CD4-positive, alpha-beta T cell (primary cell): ENCODE measurements at regions of chr15 and their contacts with region 1.

Region 1: GRCh38 chr15:84981054-84981710 is 474 bp upstream of the PDE8A start:
- DNase-seq: peak; percentile 90 to 99 (median 95)
- ATAC-seq: peak; percentile 69
- H3K4me3 ChIP-seq: peak overlapping the region; percentile 98
- H3K4me3 Mint-ChIP-seq: peak overlapping the region; percentile 98
- H3K27ac ChIP-seq: peak overlapping the region; percentile 74 to 93
- H3K27ac Mint-ChIP-seq: peak overlapping the region; percentile 95
- H3K4me1 ChIP-seq: peaks cover 32% of the 10 kb centered on the region
- H3K4me1 Mint-ChIP-seq: peaks cover 52% of the 10 kb centered on the region
- H3K27me3 ChIP-seq: no peaks in the 10 kb centered on the region
- H3K27me3 Mint-ChIP-seq: no peaks in the 10 kb centered on the region
- CTCF ChIP-seq: peak; percentile 31

Region 2: DNA sequence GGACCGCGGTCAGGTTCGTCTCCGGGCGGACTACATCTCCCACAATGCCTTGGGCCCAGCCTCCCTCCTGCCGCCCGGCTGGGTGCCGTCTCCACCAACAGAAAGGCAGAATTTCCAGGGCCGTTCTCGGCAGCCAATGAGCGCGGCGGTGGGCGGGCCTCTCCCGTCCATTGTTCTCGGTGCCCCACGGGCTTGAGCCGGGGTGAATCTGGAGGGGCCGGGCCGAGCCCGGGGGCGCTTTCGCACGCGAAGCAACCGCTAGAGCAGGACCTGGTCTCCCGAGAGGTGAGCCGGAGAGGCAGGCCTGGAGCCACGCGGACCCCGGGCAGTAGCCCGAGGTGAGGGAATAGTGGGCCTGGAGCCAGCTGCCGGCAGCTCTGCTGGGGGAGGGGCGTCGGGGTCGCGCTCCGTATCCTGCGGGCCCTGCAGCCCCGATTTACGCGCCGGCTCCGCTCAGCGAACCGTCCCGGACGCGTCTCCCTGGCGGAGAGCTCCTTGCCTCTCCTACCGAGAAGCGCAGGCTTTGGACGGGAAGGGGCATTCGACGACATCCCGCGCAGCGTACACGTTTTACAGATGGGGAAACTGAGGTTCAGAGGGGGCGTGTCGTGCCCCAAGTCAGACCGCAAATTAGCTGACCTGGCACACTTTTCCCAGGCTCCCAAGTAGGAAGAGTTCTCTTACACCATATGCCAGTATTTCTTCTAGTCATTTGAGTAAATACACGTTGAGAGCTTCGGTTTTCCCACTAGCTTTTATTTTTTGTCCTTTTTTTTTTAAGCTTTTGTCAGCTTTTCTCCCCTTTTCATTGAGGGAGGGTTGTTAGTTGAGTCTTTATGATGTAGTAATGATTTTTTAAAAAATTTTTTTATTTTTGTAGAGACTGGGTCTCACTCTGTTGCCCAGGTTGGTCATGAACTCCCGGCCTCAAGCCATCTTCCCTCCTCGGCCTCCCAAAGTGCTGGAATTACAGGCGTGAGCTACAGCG is 380.0 kb before region 1 on chr15 and contains the start of gene ZSCAN2:
- CTCF ChIA-PET with region 1: no interaction called
- POLR2A ChIA-PET with region 1: interaction called, 4 read pairs
- intact Hi-C with region 1: loop called (anchors 2 to 5 kb)
- DNase-seq: peak; percentile 87 to 95 (median 90)
- ATAC-seq: peak; percentile 97
- H3K4me3 ChIP-seq: peak within 1 kb of the TSS; percentile 95
- H3K4me3 Mint-ChIP-seq: peak within 1 kb of the TSS; percentile 98
- H3K27ac ChIP-seq: peak within 1 kb of the TSS in 1 of 2 donors; percentile 13
- H3K27ac Mint-ChIP-seq: peak within 1 kb of the TSS; percentile 78
- H3K4me1 ChIP-seq: peaks cover 62% of the 10 kb centered on the region
- H3K4me1 Mint-ChIP-seq: peaks cover 72% of the 10 kb centered on the region
- H3K27me3 ChIP-seq: no peaks in the 10 kb centered on the region
- H3K27me3 Mint-ChIP-seq: no peaks in the 10 kb centered on the region
- CTCF ChIP-seq: no peak
- total RNA-seq, gene ZSCAN2: 3.8 to 5.0 TPM

Region 3: GRCh38 chr15:84716036-84716799 is 265.0 kb before region 1 on chr15 and contains the start of gene SEC11A:
- CTCF ChIA-PET with region 1: no interaction called
- POLR2A ChIA-PET with region 1: interaction called, 16 read pairs
- intact Hi-C with region 1: no loop called
- DNase-seq: peak; percentile 83 to 95 (median 89)
- ATAC-seq: peak; percentile 95
- H3K4me3 ChIP-seq: peak within 1 kb of the TSS; percentile 99
- H3K4me3 Mint-ChIP-seq: peak within 1 kb of the TSS; percentile 93
- H3K27ac ChIP-seq: peak within 1 kb of the TSS; percentile 70 to 74
- H3K27ac Mint-ChIP-seq: peak within 1 kb of the TSS; percentile 95
- H3K4me1 ChIP-seq: peaks cover 46% of the 10 kb centered on the region
- H3K4me1 Mint-ChIP-seq: peaks cover 60% of the 10 kb centered on the region
- H3K27me3 ChIP-seq: no peaks in the 10 kb centered on the region
- H3K27me3 Mint-ChIP-seq: no peaks in the 10 kb centered on the region
- CTCF ChIP-seq: no peak
- total RNA-seq, gene SEC11A: 44.1 to 47.0 TPM

Region 4: GRCh38 chr15:84894442-84895361 is 86.5 kb before region 1 on chr15:
- CTCF ChIA-PET with region 1: no interaction called
- POLR2A ChIA-PET with region 1: no interaction called
- intact Hi-C with region 1: no loop called
- DNase-seq: no peak
- ATAC-seq: no peak
- H3K4me3 ChIP-seq: no peak overlapping the region
- H3K4me3 Mint-ChIP-seq: no peak overlapping the region
- H3K27ac ChIP-seq: no peak overlapping the region
- H3K27ac Mint-ChIP-seq: no peak overlapping the region
- H3K4me1 ChIP-seq: no peaks in the 10 kb centered on the region
- H3K4me1 Mint-ChIP-seq: no peaks in the 10 kb centered on the region
- H3K27me3 ChIP-seq: no peaks in the 10 kb centered on the region
- H3K27me3 Mint-ChIP-seq: peaks cover 6% of the 10 kb centered on the region
- CTCF ChIP-seq: no peak

Region 5: GRCh38 chr15:84944311-84944710 is 36.9 kb before region 1 on chr15:
- CTCF ChIA-PET with region 1: no interaction called
- POLR2A ChIA-PET with region 1: no interaction called
- intact Hi-C with region 1: no loop called
- DNase-seq: no peak
- ATAC-seq: no peak
- H3K4me3 ChIP-seq: no peak overlapping the region
- H3K4me3 Mint-ChIP-seq: no peak overlapping the region
- H3K27ac ChIP-seq: no peak overlapping the region
- H3K27ac Mint-ChIP-seq: no peak overlapping the region
- H3K4me1 ChIP-seq: no peaks in the 10 kb centered on the region
- H3K4me1 Mint-ChIP-seq: no peaks in the 10 kb centered on the region
- H3K27me3 ChIP-seq: no peaks in the 10 kb centered on the region
- H3K27me3 Mint-ChIP-seq: no peaks in the 10 kb centered on the region
- CTCF ChIP-seq: no peak

Region 6: DNA sequence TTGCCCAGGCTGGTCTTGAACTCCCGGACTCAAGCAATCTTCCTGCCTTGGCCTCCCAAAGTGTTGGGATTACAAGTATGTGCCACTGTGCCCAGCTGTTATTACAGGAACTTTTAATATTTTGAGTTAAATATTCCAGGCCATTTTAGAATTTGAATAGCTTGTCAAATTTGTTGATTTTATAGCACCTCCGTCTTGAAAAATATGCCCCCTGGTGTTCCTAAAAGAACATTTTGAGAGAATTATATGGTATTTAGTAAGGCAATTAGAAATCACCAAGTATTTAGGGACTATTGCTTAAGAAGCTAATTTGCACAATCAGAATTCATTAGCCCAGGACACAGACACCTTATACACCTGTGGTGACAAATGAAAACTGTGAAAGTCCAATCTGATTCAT is 24.1 kb after region 1 on chr15:
- CTCF ChIA-PET with region 1: interaction called, 11 read pairs
- POLR2A ChIA-PET with region 1: interaction called, 11 read pairs
- intact Hi-C with region 1: loop called in 1 of 2 experiments (anchors 2 kb)
- DNase-seq: no peak
- ATAC-seq: no peak
- H3K4me3 ChIP-seq: no peak overlapping the region
- H3K4me3 Mint-ChIP-seq: no peak overlapping the region
- H3K27ac ChIP-seq: no peak overlapping the region
- H3K27ac Mint-ChIP-seq: no peak overlapping the region
- H3K4me1 ChIP-seq: peaks cover 29% of the 10 kb centered on the region
- H3K4me1 Mint-ChIP-seq: peaks cover 82% of the 10 kb centered on the region
- H3K27me3 ChIP-seq: no peaks in the 10 kb centered on the region
- H3K27me3 Mint-ChIP-seq: no peaks in the 10 kb centered on the region
- CTCF ChIP-seq: no peak

Region 7: DNA sequence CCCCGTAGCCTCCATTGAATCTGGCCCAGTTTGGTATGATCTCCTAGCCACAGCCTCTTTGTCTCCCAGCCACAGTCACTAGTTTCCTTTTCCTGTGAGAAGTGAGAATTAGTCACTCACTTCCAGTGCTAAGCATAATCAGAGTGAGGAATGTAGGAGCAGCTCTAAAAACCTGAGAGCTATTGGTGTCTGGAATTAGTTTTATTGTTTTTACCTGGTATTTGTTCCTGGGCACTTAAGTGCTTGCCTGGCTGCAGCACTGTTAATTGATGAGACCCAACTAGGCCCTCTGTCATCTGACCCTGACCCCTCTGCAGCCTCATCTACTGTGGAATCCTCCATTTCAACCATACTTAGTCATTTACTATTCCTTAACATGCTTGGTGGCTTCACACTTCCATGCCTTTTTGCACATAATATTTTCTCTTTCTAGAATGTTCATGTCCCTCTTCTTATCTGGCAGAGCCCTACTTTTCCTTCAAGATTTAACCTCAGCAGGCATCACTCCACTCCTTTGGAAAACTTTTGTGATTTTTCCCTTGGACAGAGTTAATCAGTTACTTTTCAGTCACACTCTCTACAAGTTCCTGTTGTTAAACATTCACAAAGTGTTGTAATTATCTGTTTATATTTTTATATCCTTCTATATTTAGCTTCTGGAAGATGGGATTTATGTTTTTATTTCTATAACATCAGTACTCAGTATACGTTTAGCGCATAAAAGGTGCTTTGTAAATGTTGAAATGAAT is 49.3 kb after region 1 on chr15:
- CTCF ChIA-PET with region 1: no interaction called
- POLR2A ChIA-PET with region 1: interaction called, 30 read pairs
- intact Hi-C with region 1: no loop called
- DNase-seq: peak in 4 of 14 experiments; percentile 16 to 40 (median 26)
- ATAC-seq: no peak
- H3K4me3 ChIP-seq: no peak overlapping the region
- H3K4me3 Mint-ChIP-seq: peak overlapping the region; percentile 21
- H3K27ac ChIP-seq: no peak overlapping the region
- H3K27ac Mint-ChIP-seq: peak overlapping the region; percentile 69
- H3K4me1 ChIP-seq: peaks cover 35% of the 10 kb centered on the region
- H3K4me1 Mint-ChIP-seq: peaks cover 65% of the 10 kb centered on the region
- H3K27me3 ChIP-seq: no peaks in the 10 kb centered on the region
- H3K27me3 Mint-ChIP-seq: no peaks in the 10 kb centered on the region
- CTCF ChIP-seq: no peak

Region 8: GRCh38 chr15:85380217-85380811 is 399.1 kb after region 1 on chr15 and contains the start of gene AKAP13:
- CTCF ChIA-PET with region 1: no interaction called
- POLR2A ChIA-PET with region 1: no interaction called
- intact Hi-C with region 1: loop called in 1 of 2 experiments (anchors 10 kb)
- DNase-seq: peak; percentile 81 to 99 (median 92)
- ATAC-seq: peak; percentile 74
- H3K4me3 ChIP-seq: peak within 1 kb of the TSS; percentile 67
- H3K4me3 Mint-ChIP-seq: peak within 1 kb of the TSS; percentile 92
- H3K27ac ChIP-seq: peak within 1 kb of the TSS; percentile 63 to 74
- H3K27ac Mint-ChIP-seq: peak within 1 kb of the TSS; percentile 88
- H3K4me1 ChIP-seq: peaks cover 36% of the 10 kb centered on the region
- H3K4me1 Mint-ChIP-seq: peaks cover 46% of the 10 kb centered on the region
- H3K27me3 ChIP-seq: no peaks in the 10 kb centered on the region
- H3K27me3 Mint-ChIP-seq: no peaks in the 10 kb centered on the region
- CTCF ChIP-seq: no peak
- total RNA-seq, gene AKAP13: 282 to 304 TPM